ENCODE measurements at regions of chrX and their contacts with region 1.

Region 1: DNA sequence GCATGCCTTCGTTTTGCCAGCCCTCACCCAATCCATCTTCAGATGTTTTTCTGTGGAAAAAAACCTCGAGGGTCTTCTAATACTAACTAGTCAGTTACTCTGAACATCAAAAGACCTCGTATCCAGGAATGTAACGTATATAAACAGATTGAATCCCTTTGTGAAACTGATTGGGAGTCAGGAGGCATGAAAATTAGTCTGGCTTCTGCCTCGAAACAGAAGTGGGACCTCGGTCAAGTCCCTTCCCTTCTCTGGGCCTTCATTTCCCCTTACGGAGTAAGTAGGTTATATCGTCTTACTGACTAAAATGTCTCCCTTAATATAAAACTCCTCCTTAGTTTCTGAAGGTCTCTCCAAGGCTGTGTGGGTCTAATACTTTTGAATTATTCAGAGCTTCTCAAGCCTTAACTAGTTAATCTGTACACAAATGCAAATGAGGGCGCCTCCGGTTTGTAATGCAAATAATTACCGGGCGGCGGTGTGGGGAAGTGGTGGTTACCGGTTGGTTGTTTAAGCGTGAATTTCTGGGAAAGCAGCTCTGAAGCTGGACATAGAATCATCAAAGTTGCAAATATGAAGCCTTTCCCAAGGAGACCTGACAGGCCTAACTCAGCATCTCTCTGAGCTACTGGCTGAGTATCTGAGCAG is 11.4 kb upstream of the NKRF start:
- DNase-seq: no peak
- H3K4me3 ChIP-seq: no peak overlapping the region
- H3K27ac ChIP-seq: peak overlapping the region in 3 of 59 donors; percentile 2 to 26 (median 5)
- H3K27me3 ChIP-seq: peaks cover 0 to 31% (median 3%) of the 10 kb centered on the region in 45 donors
- CTCF ChIP-seq: no peak

Region 2: GRCh38 chrX:119693040-119693995 is 75.7 kb after region 1 on chrX and contains the start of gene SEPTIN6:
- intact Hi-C with region 1: loop called in 1 of 2 experiments (anchors 10 kb)
- DNase-seq: peak in 9 of 10 donors; percentile 24 to 76 (median 52)
- H3K4me3 ChIP-seq: peak within 1 kb of the TSS; percentile 41 to 78 (median 64)
- H3K27ac ChIP-seq: peak within 1 kb of the TSS in 52 of 59 donors; percentile 1 to 88 (median 66)
- H3K27me3 ChIP-seq: peaks cover 0 to 59% (median 9%) of the 10 kb centered on the region in 45 donors
- CTCF ChIP-seq: no peak
- total RNA-seq, gene SEPTIN6: 14.0 to 49.1 (median 34.8) TPM

Measured in dorsolateral prefrontal cortex (tissue), 120 donors.